MCF 10A (cell line): ENCODE measurements at regions of chr16 and their contacts with region 1.

Region 1: GRCh38 chr16:19886073-19886941 is 1.7 kb upstream of the GPRC5B start:
- DNase-seq: peak; percentile 76
- H3K4me3 Mint-ChIP-seq: peak overlapping the region; percentile 60
- H3K27ac Mint-ChIP-seq: no peak overlapping the region
- H3K4me1 Mint-ChIP-seq: peaks cover 4% of the 10 kb centered on the region
- H3K27me3 Mint-ChIP-seq: peaks cover 12% of the 10 kb centered on the region
- CTCF ChIP-seq: peak; percentile 98

Region 2: GRCh38 chr16:19389246-19389645 is 497.1 kb before region 1 on chr16:
- CTCF ChIA-PET with region 1: interaction called, 3 read pairs
- POLR2A ChIA-PET with region 1: no interaction called
- intact Hi-C with region 1: loop called (anchors 2 kb)
- DNase-seq: peak; percentile 73
- H3K4me3 Mint-ChIP-seq: no peak overlapping the region
- H3K27ac Mint-ChIP-seq: no peak overlapping the region
- H3K4me1 Mint-ChIP-seq: peaks cover 20% of the 10 kb centered on the region
- H3K27me3 Mint-ChIP-seq: no peaks in the 10 kb centered on the region
- CTCF ChIP-seq: peak; percentile 51

Region 3: GRCh38 chr16:19578378-19578971 is 307.8 kb before region 1 on chr16:
- CTCF ChIA-PET with region 1: interaction called, 41 read pairs
- POLR2A ChIA-PET with region 1: no interaction called
- intact Hi-C with region 1: loop called (anchors 5 kb)
- DNase-seq: no peak
- H3K4me3 Mint-ChIP-seq: no peak overlapping the region
- H3K27ac Mint-ChIP-seq: no peak overlapping the region
- H3K4me1 Mint-ChIP-seq: no peaks in the 10 kb centered on the region
- H3K27me3 Mint-ChIP-seq: no peaks in the 10 kb centered on the region
- CTCF ChIP-seq: no peak

Region 4: GRCh38 chr16:19601083-19601976 is 285.0 kb before region 1 on chr16:
- CTCF ChIA-PET with region 1: interaction called, 184 read pairs
- POLR2A ChIA-PET with region 1: interaction called, 3 read pairs
- intact Hi-C with region 1: loop called (anchors 1 kb)
- DNase-seq: peak; percentile 48
- H3K4me3 Mint-ChIP-seq: no peak overlapping the region
- H3K27ac Mint-ChIP-seq: peak overlapping the region; percentile 27
- H3K4me1 Mint-ChIP-seq: no peaks in the 10 kb centered on the region
- H3K27me3 Mint-ChIP-seq: no peaks in the 10 kb centered on the region
- CTCF ChIP-seq: peak; percentile 55

Region 5: GRCh38 chr16:19717771-19718602 is 168.3 kb before region 1 on chr16 and contains the starts of genes IQCK and KNOP1:
- CTCF ChIA-PET with region 1: no interaction called
- POLR2A ChIA-PET with region 1: no interaction called
- intact Hi-C with region 1: loop called (anchors 5 kb)
- DNase-seq: peak; percentile 80
- H3K4me3 Mint-ChIP-seq: peak within 1 kb of the TSS; percentile 87
- H3K27ac Mint-ChIP-seq: peak within 1 kb of the TSS; percentile 65
- H3K4me1 Mint-ChIP-seq: peaks cover 27% of the 10 kb centered on the region
- H3K27me3 Mint-ChIP-seq: no peaks in the 10 kb centered on the region
- CTCF ChIP-seq: no peak
- total RNA-seq, gene IQCK: 5.9 and 8.4 TPM in 2 replicates
- total RNA-seq, gene KNOP1: 22.3 and 24.5 TPM in 2 replicates

Region 6: DNA sequence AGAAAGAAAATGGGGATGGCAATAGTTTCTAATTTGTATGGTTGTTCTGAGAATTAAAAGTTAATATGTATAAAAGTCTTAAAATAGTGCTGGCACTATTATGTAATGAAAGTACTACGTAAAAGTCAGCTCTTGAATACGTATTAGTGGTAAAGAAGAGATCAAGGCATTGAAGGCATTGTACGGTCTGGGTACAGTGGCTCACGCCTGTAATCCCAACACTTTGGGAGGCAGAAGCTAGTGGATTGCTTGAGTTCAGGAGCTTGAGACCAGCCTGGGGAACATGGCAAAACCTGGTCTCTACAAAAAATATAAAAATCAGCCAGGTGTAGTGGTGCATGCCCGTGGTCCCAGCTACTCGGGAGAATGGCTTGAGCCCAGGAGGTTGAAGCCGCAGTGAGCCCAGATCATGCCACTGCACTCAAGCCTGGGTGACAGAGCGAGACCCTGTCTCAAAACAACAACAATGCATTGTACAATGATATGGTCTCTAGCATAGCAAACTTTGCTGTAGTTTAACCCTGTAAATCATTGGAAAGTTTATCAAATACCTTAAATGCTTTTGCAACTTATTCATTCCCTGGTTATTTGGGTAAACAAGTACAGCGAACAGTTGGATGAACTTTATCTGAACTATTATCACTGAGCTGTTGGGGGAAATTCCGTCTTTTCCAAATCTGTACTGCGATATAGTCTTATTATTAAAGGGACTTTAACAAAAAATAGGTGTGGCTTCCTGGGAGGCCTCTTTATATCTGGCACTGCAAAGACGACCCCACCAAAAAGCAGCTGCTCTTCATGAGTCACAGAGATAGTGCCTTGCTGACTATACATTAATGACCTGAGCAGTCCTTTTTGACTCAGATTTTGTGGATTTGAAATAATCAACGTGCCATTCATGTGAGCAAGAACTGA is 75.2 kb before region 1 on chr16:
- CTCF ChIA-PET with region 1: no interaction called
- POLR2A ChIA-PET with region 1: no interaction called
- intact Hi-C with region 1: no loop called
- DNase-seq: peak; percentile 22
- H3K4me3 Mint-ChIP-seq: no peak overlapping the region
- H3K27ac Mint-ChIP-seq: no peak overlapping the region
- H3K4me1 Mint-ChIP-seq: peaks cover 6% of the 10 kb centered on the region
- H3K27me3 Mint-ChIP-seq: no peaks in the 10 kb centered on the region
- CTCF ChIP-seq: no peak

Region 7: DNA sequence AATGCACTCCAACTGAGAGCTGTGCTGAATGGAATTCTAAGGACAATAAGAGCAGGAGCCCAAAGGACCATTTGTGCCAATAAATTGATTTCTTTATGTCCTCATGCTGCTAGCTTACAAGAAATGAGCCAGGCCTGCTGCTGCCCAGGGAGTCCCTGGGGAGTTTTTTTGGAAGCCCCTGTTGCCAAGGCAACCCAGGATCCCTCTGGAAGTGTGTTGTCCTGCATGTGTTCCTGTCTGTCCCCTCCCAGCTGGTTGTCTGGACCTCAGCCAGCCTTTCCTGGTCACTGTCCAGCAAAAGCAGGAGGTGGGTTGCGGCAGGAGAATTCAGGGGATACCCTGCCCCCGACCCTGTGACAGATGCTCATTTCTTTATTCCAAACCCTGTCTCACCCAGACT is 49.4 kb after region 1 on chr16:
- CTCF ChIA-PET with region 1: no interaction called
- POLR2A ChIA-PET with region 1: no interaction called
- intact Hi-C with region 1: no loop called
- DNase-seq: no peak
- H3K4me3 Mint-ChIP-seq: no peak overlapping the region
- H3K27ac Mint-ChIP-seq: no peak overlapping the region
- H3K4me1 Mint-ChIP-seq: no peaks in the 10 kb centered on the region
- H3K27me3 Mint-ChIP-seq: peaks cover 12% of the 10 kb centered on the region
- CTCF ChIP-seq: no peak

Region 8: GRCh38 chr16:20107095-20107494 is 220.8 kb after region 1 on chr16:
- CTCF ChIA-PET with region 1: no interaction called
- POLR2A ChIA-PET with region 1: no interaction called
- intact Hi-C with region 1: no loop called
- DNase-seq: no peak
- H3K4me3 Mint-ChIP-seq: no peak overlapping the region
- H3K27ac Mint-ChIP-seq: no peak overlapping the region
- H3K4me1 Mint-ChIP-seq: no peaks in the 10 kb centered on the region
- H3K27me3 Mint-ChIP-seq: peaks cover 63% of the 10 kb centered on the region
- CTCF ChIP-seq: no peak

Region 9: GRCh38 chr16:20300312-20301097 is 414.2 kb after region 1 on chr16:
- CTCF ChIA-PET with region 1: interaction called, 15 read pairs
- POLR2A ChIA-PET with region 1: no interaction called
- intact Hi-C with region 1: no loop called
- DNase-seq: peak; percentile 68
- H3K4me3 Mint-ChIP-seq: no peak overlapping the region
- H3K27ac Mint-ChIP-seq: no peak overlapping the region
- H3K4me1 Mint-ChIP-seq: no peaks in the 10 kb centered on the region
- H3K27me3 Mint-ChIP-seq: peaks cover 54% of the 10 kb centered on the region
- CTCF ChIP-seq: peak; percentile 74